Cardiac septum (tissue), 1 donor: ENCODE measurements at regions of chr22 and their contacts with region 1.

Region 1: DNA sequence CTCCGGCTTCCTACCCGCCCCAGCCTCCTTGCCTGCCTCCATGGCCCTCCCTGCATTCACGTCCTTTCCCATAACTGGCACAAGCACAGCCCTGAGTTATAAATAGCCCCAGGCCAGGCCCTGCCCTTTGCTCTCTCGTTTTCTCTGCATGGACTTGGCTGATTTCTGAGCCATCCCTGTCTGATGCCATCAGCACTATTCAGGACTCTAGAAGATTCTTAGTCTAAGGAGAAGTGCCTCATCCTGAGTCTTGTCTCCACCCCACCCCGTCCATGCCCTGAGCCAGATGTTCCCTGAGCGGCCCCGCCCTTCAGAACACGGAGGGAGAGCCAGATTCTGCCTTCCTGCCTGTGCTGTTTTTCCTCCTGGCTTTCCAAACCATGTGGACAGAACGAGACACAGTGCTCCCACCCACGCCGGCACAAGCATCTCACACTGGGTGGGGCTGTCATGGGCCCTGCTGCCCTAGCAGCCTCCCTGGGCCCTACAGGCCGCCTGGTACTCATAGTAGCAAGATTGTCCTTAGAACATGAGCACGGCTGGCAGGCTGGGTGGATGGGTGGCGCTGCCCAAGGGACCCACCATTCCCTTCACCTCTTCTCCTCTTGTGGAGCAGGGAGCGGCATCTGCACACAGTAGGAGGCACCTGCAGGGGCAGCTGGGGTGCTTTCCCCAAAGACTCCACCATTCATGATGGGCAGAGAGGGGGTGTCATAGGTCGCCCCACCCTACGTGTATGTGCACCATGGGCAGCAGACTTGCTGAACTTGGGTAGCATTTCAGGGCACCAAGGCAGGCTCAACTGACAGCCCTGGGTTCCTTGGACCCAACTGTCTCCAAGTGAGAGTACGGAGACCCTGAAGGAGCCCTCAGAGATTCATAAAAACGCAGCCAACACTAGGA is 76.9 kb downstream of the BCR start:
- DNase-seq: peak; percentile 82

Region 2: GRCh38 chr22:23204541-23205157 is 52.6 kb before region 1 on chr22:
- intact Hi-C with region 1: loop called (anchors 2 kb)
- DNase-seq: peak; percentile 88

Region 3: GRCh38 chr22:23219822-23220484 is 37.3 kb before region 1 on chr22:
- intact Hi-C with region 1: no loop called
- DNase-seq: no peak

Region 4: GRCh38 chr22:23231471-23232093 is 25.7 kb before region 1 on chr22:
- intact Hi-C with region 1: loop called (anchors 1 kb)
- DNase-seq: no peak